Common myeloid progenitor, CD34-positive (primary cell): ENCODE measurements at regions of chr10 and their contacts with region 1.

Region 1: DNA sequence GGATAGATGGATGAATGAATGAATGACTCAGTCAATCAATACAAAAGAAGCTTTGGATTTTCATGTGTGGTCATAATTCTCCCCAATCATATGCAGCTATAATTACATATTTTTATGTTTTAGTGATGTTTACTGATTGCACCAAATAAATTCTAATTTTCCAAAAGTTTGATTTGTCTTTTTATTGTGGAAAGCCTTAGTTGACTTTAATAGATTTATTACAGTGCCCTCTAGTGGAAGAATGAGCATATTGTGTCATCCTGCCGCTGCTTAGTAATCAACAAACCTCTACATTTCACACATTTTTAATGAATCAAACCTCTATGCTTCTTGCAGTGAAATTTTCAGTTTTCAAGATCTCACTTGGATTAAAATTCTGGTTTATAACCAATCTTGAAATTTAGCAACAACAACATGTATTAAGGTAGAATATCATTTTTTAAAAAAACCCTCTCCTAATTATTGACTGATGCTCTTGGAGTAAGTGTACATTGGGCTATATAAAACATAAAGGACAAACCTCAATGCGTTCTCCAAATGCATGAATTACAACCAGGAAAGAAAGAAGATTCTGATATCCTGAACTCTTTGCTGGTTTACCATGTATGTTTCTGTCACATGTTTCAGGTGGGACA is 55.6 kb upstream of the PNLIP start:
- DNase-seq: peak; percentile 31 to 63 (median 50)
- H3K4me3 ChIP-seq: no peak overlapping the region
- H3K27ac ChIP-seq: no peak overlapping the region
- H3K4me1 ChIP-seq: no peaks in the 10 kb centered on the region
- H3K27me3 ChIP-seq: peaks cover 2 to 13% (median 4%) of the 10 kb centered on the region in 5 experiments

Region 2: DNA sequence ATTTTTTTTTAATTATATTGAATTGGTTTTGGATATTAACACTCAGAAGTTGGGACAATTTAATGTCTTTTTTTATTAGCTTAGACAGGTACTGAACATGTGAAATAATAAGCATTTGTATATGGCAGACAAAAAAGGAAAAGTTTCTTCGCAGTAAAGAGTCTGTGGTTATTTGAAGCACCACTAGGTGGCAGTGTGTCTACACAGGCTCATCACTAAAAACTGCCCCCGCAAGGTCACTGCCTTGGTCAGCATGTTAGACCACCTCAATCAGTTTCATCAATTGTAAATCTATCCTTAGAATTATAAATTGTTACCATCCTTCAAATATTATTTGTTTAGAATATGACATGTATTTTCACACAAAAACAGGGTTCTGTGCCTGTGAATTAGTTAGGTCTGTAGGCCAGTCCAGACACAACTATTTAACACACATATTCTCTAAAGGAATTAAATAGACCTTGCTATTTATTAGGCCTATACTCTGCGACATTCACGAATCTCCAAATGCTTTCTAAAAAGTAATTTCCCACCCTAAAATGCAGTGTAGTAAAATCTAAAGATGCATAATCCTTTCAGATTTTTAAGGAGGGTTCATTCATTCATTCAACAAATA is 45.5 kb before region 1 on chr10:
- CTCF ChIA-PET with region 1: interaction called, 19 read pairs
- POLR2A ChIA-PET with region 1: no interaction called
- DNase-seq: peak; percentile 36 to 62 (median 52)
- H3K4me3 ChIP-seq: no peak overlapping the region
- H3K27ac ChIP-seq: no peak overlapping the region
- H3K4me1 ChIP-seq: no peaks in the 10 kb centered on the region
- H3K27me3 ChIP-seq: no peaks in the 10 kb centered on the region